ENCODE measurements at regions of chr14 and their contacts with region 1.

Region 1: DNA sequence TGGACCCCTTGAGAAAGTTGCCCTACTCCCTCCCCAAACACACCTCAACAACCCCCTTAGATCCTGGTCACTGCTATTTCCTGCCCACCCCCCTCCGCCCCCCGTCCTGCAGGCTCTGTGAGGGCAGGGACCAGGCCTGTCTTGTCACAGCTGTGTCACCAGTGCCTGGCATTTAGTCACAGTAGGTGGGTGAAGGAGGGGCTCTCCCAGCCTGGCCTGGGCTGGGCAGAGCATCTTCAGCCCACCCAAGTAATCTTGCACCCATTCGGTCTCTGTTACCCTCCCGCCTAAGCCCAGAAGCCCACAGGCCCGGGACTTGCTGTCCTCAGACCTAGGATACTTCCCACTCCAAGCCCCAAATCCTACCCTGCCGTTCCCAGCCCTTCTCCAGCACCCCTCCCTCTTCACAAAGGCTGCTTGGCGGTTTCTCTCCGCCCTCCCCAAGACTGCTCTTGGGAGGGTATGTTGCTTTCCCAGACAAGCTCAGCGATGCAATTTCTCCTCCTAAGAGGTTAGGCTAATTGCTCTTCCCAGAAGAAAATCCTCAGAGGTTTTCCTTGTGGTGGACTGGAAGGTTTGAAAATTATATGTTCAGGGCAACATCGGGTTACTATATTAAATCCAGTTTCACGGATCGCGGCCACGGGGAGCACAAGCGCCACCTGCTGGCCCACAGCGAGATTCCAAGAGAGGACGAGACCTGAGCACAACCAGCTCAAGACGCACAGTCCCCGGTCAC is 50.8 kb upstream of the ZFP36L1 start:
- DNase-seq: peak; percentile 87
- ATAC-seq: peak; percentile 71
- H3K4me3 Mint-ChIP-seq: peak overlapping the region; percentile 22
- H3K27ac Mint-ChIP-seq: peak overlapping the region; percentile 63
- H3K4me1 Mint-ChIP-seq: peaks cover 39% of the 10 kb centered on the region
- H3K27me3 Mint-ChIP-seq: no peaks in the 10 kb centered on the region
- CTCF ChIP-seq: peak; percentile 91

Region 2: DNA sequence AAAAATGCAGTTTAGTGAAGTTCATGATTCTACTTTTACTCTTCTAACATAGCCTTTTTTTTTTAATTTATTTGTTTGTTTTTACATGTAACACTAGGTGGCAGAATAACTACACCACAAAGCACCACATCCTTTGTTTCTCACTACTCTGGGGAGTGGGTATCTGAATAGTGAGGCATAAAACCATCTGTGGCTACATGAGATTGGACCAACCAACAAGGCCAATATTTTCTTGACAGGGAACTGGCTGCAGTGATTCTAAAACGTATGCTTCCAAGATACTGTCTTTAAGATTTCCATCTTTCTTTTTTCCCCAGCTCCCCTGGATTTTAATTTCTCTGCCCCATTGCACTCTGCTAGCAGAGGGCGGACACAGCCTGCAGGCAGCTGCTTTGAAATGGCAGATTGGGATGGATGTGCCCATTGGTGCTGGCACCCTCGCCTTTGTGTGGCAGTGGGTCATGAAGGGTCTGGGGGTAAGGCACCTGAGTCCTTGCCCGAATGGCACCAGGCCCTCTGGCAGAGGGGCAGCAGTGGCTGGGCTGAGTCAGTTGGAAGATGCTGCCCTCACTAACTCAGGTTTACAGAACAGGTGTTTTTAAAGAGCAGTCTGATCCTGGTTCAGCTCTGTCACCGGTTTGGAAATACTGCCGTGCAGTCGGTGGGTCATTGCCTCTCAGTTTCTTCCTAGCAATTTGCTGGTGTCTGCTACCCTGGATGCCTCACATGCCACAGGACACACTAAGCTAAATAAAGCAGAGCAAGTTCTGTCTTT is 595.0 kb before region 1 on chr14:
- CTCF ChIA-PET with region 1: interaction called, 12 read pairs
- POLR2A ChIA-PET with region 1: no interaction called
- intact Hi-C with region 1: no loop called
- DNase-seq: no peak
- ATAC-seq: peak; percentile 70
- H3K4me3 Mint-ChIP-seq: no peak overlapping the region
- H3K27ac Mint-ChIP-seq: no peak overlapping the region
- H3K4me1 Mint-ChIP-seq: peaks cover 41% of the 10 kb centered on the region
- H3K27me3 Mint-ChIP-seq: no peaks in the 10 kb centered on the region
- CTCF ChIP-seq: peak; percentile 87

Region 3: DNA sequence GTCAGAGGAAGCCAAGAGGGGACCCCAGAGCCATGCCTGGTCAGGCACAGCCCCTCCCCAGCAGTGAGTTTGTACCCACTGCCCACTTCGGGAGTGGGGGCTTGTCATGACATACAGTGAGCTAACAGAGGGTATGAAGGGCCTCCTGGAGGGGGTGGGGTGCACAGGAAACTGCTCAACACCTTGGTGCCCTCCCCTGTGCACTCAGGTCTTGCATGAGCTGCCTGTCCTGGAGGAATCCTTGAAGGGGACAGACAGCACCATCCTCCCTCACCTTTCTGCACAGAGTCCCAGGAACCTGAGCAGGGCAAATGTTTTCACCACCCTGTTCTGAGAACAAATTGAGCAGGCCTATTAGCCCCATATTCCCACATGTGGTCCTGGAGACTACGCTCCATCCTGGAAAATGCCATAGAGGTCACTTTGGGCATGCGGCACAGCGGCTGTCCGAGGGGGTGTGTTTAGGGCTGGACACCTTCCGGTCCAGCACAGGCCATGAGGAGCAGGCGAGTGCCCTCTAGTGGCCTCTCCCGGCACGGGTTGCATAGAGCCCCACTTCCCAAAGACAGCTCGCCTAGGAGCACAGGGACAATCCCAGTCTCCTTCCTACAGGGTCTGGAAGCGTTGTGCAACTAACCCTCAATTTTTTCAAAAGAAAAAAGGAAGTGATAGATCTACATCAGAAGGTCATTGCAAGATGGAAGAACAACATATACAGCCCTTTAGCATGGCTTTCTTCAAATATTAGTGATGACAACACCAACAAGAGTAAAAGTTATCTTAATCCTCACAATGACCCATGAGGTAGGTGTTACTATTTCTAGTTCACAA is 18.9 kb before region 1 on chr14:
- CTCF ChIA-PET with region 1: interaction called, 68 read pairs
- POLR2A ChIA-PET with region 1: interaction called, 3 read pairs
- intact Hi-C with region 1: no loop called
- DNase-seq: peak; percentile 50
- ATAC-seq: no peak
- H3K4me3 Mint-ChIP-seq: no peak overlapping the region
- H3K27ac Mint-ChIP-seq: no peak overlapping the region
- H3K4me1 Mint-ChIP-seq: peaks cover 31% of the 10 kb centered on the region
- H3K27me3 Mint-ChIP-seq: no peaks in the 10 kb centered on the region
- CTCF ChIP-seq: peak; percentile 84

Region 4: GRCh38 chr14:69107407-69108003 is 263.9 kb after region 1 on chr14:
- CTCF ChIA-PET with region 1: interaction called, 11 read pairs
- POLR2A ChIA-PET with region 1: no interaction called
- intact Hi-C with region 1: no loop called
- DNase-seq: peak; percentile 46
- ATAC-seq: peak; percentile 75
- H3K4me3 Mint-ChIP-seq: no peak overlapping the region
- H3K27ac Mint-ChIP-seq: peak overlapping the region; percentile 19
- H3K4me1 Mint-ChIP-seq: peaks cover 5% of the 10 kb centered on the region
- H3K27me3 Mint-ChIP-seq: no peaks in the 10 kb centered on the region
- CTCF ChIP-seq: peak; percentile 67